ENCODE measurements at regions of chr16 and their contacts with region 1.

Region 1: DNA sequence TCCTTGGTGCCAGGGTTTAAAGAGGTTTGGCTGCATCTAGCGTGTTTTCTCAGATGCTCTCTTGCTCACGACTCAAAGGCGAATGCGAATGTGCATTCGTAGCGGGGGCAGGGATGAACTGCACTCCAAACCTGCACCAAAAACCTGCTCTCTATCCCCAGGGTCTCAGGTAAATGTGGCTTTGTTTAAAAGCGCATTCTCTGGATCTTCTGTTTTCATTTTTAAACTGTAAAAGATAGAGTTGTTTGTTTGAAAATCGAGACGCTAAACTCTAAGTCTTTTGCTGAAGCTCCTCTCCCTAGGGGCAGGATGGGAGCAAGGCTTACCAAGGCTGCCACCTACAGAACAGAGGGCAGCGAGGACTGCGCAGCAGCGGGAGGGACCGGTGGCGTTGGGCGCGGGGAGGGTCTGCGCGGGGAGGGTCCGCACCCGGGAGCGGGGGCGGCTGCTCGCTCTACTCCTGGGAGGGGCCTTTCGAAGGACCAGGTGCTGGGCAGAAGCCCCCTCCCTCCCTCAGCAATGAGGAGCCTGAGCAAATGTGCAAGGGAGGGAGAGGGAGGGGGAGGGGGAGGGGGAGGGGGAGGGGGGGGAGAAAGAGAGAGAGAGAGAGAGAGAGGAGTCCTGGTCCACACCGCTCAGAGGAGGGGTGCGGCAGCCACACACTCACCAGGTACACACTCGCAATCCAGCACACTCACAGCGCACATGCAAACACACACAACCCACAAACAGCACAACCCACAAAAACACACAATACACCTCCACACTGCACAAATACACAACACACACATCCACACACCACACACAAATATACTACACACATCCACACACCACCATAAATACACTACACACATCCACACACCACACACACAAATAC is 142.8 kb downstream of the GRIN2A start:
- DNase-seq: no peak
- H3K4me3 ChIP-seq: no peak overlapping the region
- H3K27ac ChIP-seq: no peak overlapping the region
- H3K4me1 ChIP-seq: no peaks in the 10 kb centered on the region
- CTCF ChIP-seq: no peak

Region 2: DNA sequence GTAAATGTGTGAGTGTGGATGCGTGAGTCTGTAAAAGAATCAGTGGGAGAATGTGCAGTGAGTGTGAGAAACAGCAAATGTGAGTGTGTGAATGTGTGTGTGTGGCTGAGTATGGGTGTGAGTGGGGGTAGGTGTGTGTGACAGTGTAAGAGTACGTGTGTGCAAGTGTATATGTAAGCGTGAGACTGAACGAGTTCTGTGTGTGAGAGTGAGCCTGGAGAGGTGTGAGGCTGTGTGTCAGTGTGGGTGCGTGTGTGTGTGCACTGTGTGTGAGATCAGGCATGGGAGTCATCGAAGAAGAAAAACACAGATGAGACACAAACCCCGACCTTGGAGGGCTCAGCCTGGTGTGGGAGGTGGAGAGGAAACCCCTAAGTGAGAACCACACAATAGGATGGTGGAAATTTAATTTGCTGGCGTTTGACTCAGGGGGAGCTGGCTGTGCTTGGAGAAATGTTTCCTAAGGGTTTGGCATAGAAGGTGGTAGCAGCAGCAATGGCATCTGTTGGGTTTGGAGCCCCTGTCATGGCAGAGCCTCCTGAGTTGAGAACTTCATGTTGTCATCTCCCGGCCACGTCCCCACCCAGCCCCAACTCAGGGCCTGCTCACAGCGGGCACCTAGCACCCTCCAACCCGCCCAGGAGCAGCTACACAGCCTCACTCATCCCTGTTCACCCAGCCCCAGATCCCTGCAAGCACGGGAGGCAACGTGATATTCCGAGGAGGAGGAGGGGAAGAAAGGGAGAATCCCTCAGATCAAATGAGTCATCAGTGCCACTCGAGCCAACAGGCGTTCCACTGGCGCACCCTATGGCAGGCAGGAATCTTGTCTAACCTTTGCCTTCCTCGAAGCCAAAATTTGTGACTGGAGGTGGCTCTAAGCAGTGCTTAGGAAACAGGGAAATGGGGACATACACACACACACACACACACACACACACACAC is 689.9 kb after region 1 on chr16:
- CTCF ChIA-PET with region 1: no interaction called
- POLR2A ChIA-PET with region 1: no interaction called
- intact Hi-C with region 1: loop called (anchors 5 kb)
- DNase-seq: no peak
- H3K4me3 ChIP-seq: no peak overlapping the region
- H3K27ac ChIP-seq: no peak overlapping the region
- H3K4me1 ChIP-seq: no peaks in the 10 kb centered on the region
- CTCF ChIP-seq: no peak

Measured in OCI-LY7 (cell line).